Activated CD8-positive, alpha-beta T cell treated with anti-CD3 and anti-CD28 coated beads for 36 hours (primary cell): ENCODE measurements at regions of chr3 and their contacts with region 1.

Region 1: DNA sequence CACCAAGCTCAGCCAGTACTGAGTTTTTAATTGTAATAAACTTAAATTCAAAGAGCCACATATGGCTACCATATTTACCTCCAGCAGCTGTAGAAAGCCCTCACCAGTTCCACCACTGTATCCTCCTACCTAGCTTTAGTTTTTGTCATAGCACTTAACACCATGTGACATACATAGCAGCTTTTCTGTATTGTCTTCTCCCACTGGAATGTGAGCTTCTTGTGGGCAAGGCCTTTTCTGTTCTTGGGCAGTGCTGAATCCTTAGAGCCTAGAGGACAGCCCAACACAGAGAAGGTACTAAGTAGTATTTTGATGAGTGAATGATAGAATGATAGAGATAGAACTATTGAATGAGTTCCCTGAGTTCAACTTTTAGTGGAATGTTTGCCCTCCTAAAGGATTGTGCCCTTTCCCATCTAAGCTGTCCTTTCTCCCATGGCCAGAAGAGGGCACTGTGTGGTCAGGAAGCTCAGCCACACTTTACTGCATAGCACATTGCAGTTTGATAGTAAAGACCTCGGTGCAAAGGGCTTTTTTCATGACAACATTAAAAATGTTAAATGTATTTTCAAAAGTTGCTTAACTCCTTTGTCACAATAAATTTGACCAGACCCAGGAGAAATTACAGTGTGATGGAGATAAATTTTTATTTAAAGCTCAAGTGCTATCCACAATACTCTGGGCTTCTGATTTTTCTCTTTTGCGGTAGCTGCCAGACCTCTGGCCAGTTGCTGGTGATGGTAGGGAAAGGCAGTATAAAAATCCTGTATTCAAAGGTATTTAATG is 115.8 kb downstream of the GHSR start:
- DNase-seq: peak; percentile 63
- ATAC-seq: peak; percentile 79
- H3K4me3 Mint-ChIP-seq: no peak overlapping the region
- H3K27ac Mint-ChIP-seq: no peak overlapping the region
- H3K4me1 Mint-ChIP-seq: no peaks in the 10 kb centered on the region
- H3K27me3 Mint-ChIP-seq: no peaks in the 10 kb centered on the region
- CTCF ChIP-seq: peak; percentile 86

Region 2: DNA sequence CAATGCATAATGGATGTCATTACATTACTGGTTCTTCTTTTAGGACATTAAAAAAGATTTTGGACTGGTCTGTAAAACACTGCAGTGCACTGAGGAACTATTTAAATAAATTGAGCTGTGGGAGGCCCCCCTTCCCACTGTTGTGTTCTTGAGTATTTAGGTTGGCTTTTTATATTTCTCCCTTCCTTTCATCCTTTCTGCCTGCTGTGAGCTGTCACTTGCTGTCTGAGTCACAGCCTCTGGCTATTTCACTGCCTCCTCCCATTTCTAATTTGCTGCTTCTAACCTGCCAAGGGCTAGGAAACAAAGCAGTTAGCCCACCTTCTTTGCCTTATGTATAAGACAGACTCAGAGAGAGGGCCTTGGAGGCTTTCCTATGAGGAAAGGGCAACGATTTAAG is 382.1 kb before region 1 on chr3:
- CTCF ChIA-PET with region 1: no interaction called
- POLR2A ChIA-PET with region 1: no interaction called
- intact Hi-C with region 1: no loop called
- DNase-seq: peak; percentile 12
- ATAC-seq: peak; percentile 69
- H3K4me3 Mint-ChIP-seq: no peak overlapping the region
- H3K27ac Mint-ChIP-seq: no peak overlapping the region
- H3K4me1 Mint-ChIP-seq: no peaks in the 10 kb centered on the region
- H3K27me3 Mint-ChIP-seq: peaks cover 7% of the 10 kb centered on the region
- CTCF ChIP-seq: no peak

Region 3: GRCh38 chr3:172039436-172040077 is 292.9 kb before region 1 on chr3 and contains the start of gene FNDC3B:
- CTCF ChIA-PET with region 1: interaction called, 12 read pairs
- POLR2A ChIA-PET with region 1: no interaction called
- intact Hi-C with region 1: no loop called
- DNase-seq: peak; percentile 97
- ATAC-seq: peak; percentile 92
- H3K4me3 Mint-ChIP-seq: peak within 1 kb of the TSS; percentile 86
- H3K27ac Mint-ChIP-seq: peak within 1 kb of the TSS; percentile 93
- H3K4me1 Mint-ChIP-seq: peaks cover 29% of the 10 kb centered on the region
- H3K27me3 Mint-ChIP-seq: no peaks in the 10 kb centered on the region
- CTCF ChIP-seq: no peak
- total RNA-seq, gene FNDC3B: 10.6 to 12.0 TPM

Region 4: GRCh38 chr3:172315401-172316091 is 16.9 kb before region 1 on chr3:
- CTCF ChIA-PET with region 1: interaction called, 24 read pairs
- POLR2A ChIA-PET with region 1: no interaction called
- intact Hi-C with region 1: no loop called
- DNase-seq: peak; percentile 39
- ATAC-seq: no peak
- H3K4me3 Mint-ChIP-seq: no peak overlapping the region
- H3K27ac Mint-ChIP-seq: no peak overlapping the region
- H3K4me1 Mint-ChIP-seq: peaks cover 8% of the 10 kb centered on the region
- H3K27me3 Mint-ChIP-seq: no peaks in the 10 kb centered on the region
- CTCF ChIP-seq: no peak

Region 5: DNA sequence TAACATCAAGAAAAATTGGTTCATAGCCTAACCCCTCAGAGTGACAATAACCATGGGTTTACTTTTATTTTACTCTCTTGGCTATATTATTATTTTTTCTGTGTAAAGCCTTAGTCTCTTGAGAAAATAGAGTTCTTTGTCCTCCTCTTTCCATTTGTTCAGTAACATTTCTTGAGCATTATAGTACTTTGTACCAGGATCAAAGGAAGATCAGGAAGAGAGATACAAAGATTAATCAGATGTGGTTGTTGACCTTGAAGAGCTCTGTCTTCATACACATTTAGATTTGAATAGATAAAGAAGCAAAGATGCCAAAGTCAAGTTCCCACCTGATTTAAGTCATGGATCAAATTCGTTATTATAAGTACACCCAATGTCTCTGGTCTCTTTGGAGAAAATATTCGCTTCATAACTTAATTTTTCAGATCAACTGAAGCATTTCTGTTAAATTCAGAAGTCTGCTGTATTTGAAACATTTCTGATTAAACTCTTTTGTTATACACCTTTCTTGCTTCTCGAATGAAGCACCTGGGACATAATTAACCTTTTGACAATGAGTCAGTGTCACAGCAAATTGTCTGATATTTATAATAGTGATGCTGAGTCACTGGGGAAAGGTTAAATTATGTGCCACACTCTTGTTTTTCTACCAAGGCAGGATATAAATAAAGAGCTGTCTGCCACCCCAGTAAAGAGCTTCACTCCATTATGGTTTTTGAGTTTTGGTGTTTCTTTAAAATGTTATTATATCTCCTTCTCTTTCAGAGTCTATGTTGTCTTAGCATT is 15.6 kb after region 1 on chr3:
- CTCF ChIA-PET with region 1: interaction called, 48 read pairs
- POLR2A ChIA-PET with region 1: no interaction called
- intact Hi-C with region 1: no loop called
- DNase-seq: no peak
- ATAC-seq: no peak
- H3K4me3 Mint-ChIP-seq: no peak overlapping the region
- H3K27ac Mint-ChIP-seq: no peak overlapping the region
- H3K4me1 Mint-ChIP-seq: no peaks in the 10 kb centered on the region
- H3K27me3 Mint-ChIP-seq: no peaks in the 10 kb centered on the region
- CTCF ChIP-seq: no peak

Region 6: GRCh38 chr3:172449466-172450149 is 117.2 kb after region 1 on chr3:
- CTCF ChIA-PET with region 1: no interaction called
- POLR2A ChIA-PET with region 1: no interaction called
- intact Hi-C with region 1: no loop called
- DNase-seq: peak; percentile 25
- ATAC-seq: no peak
- H3K4me3 Mint-ChIP-seq: no peak overlapping the region
- H3K27ac Mint-ChIP-seq: no peak overlapping the region
- H3K4me1 Mint-ChIP-seq: peaks cover 25% of the 10 kb centered on the region
- H3K27me3 Mint-ChIP-seq: peaks cover 71% of the 10 kb centered on the region
- CTCF ChIP-seq: no peak

Region 7: GRCh38 chr3:172476347-172476746 is 143.9 kb after region 1 on chr3:
- CTCF ChIA-PET with region 1: interaction called, 16 read pairs
- POLR2A ChIA-PET with region 1: no interaction called
- intact Hi-C with region 1: loop called (anchors 10 kb)
- DNase-seq: no peak
- ATAC-seq: no peak
- H3K4me3 Mint-ChIP-seq: peak overlapping the region; percentile 77
- H3K27ac Mint-ChIP-seq: no peak overlapping the region
- H3K4me1 Mint-ChIP-seq: peaks cover 9% of the 10 kb centered on the region
- H3K27me3 Mint-ChIP-seq: peaks cover 3% of the 10 kb centered on the region
- CTCF ChIP-seq: no peak

Region 8: GRCh38 chr3:172673210-172673679 is 340.8 kb after region 1 on chr3:
- CTCF ChIA-PET with region 1: interaction called, 48 read pairs
- POLR2A ChIA-PET with region 1: interaction called, 3 read pairs
- intact Hi-C with region 1: loop called (anchors 5 kb)
- DNase-seq: peak; percentile 86
- ATAC-seq: peak; percentile 84
- H3K4me3 Mint-ChIP-seq: no peak overlapping the region
- H3K27ac Mint-ChIP-seq: no peak overlapping the region
- H3K4me1 Mint-ChIP-seq: peaks cover 2% of the 10 kb centered on the region
- H3K27me3 Mint-ChIP-seq: no peaks in the 10 kb centered on the region
- CTCF ChIP-seq: peak; percentile 70